MCF 10A (cell line): ENCODE measurements at regions of chr17 and their contacts with region 1.

Region 1: GRCh38 chr17:50626037-50626574 is 8.6 kb upstream of the ABCC3 start:
- DNase-seq: peak; percentile 75
- H3K4me3 Mint-ChIP-seq: no peak overlapping the region
- H3K27ac Mint-ChIP-seq: no peak overlapping the region
- H3K4me1 Mint-ChIP-seq: peaks cover 6% of the 10 kb centered on the region
- H3K27me3 Mint-ChIP-seq: no peaks in the 10 kb centered on the region
- CTCF ChIP-seq: peak; percentile 72

Region 2: DNA sequence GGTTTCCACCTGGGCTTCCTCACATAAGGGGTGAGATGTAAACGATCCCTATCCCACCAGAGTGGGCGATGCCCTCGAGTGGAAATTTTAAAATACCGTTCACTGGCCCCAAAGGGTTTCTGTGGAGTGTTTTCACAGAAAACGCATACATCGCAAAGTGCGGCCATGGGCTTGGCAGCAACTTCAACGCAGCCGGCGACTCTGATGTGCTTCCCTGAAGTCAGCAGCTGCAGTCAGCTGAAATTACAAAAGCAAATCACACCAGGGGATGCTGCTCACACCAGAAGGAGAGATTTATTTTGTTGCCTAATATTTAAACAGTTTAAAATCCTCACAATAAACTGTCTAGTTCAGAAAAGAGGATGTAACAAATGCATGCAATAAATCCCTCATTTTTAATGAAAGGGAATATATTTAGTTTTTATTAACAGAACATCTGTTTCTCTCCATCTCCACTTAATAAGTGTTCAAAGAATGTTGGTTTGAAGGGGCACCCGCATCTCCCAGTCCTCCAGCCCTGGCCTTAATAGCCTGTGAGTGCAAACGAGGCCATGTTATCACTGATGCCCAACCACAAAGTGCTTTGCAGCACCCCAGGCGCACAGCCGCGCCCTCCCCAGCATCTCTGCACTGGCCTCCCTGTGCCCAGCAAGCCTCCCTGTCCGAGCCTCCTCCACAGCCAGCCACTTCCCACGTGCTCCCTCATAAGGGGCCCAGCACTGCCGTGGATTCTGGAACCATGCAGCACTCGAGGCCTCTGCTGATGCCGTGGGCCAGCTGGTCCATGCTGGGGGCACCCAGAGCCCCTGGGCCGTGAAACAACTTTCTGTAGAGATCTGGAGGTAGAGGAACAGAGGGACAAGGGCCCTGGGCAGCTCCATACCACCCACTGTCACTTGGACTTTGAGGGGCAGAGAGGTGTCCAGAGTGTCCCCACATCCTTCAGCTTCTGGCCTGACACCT is 297.5 kb before region 1 on chr17:
- CTCF ChIA-PET with region 1: no interaction called
- POLR2A ChIA-PET with region 1: no interaction called
- intact Hi-C with region 1: no loop called
- DNase-seq: no peak
- H3K4me3 Mint-ChIP-seq: no peak overlapping the region
- H3K27ac Mint-ChIP-seq: no peak overlapping the region
- H3K4me1 Mint-ChIP-seq: peaks cover 13% of the 10 kb centered on the region
- H3K27me3 Mint-ChIP-seq: no peaks in the 10 kb centered on the region
- CTCF ChIP-seq: no peak

Region 3: GRCh38 chr17:50547035-50547735 is 78.9 kb before region 1 on chr17 and contains the start of gene SPATA20:
- CTCF ChIA-PET with region 1: interaction called, 22 read pairs
- POLR2A ChIA-PET with region 1: interaction called, 5 read pairs
- intact Hi-C with region 1: loop called (anchors 1 kb)
- DNase-seq: peak; percentile 89
- H3K4me3 Mint-ChIP-seq: peak within 1 kb of the TSS; percentile 79
- H3K27ac Mint-ChIP-seq: no peak within 1 kb of the TSS
- H3K4me1 Mint-ChIP-seq: peaks cover 17% of the 10 kb centered on the region
- H3K27me3 Mint-ChIP-seq: no peaks in the 10 kb centered on the region
- CTCF ChIP-seq: peak; percentile 99
- total RNA-seq, gene SPATA20: 35.3 and 39.4 TPM in 2 replicates

Region 4: DNA sequence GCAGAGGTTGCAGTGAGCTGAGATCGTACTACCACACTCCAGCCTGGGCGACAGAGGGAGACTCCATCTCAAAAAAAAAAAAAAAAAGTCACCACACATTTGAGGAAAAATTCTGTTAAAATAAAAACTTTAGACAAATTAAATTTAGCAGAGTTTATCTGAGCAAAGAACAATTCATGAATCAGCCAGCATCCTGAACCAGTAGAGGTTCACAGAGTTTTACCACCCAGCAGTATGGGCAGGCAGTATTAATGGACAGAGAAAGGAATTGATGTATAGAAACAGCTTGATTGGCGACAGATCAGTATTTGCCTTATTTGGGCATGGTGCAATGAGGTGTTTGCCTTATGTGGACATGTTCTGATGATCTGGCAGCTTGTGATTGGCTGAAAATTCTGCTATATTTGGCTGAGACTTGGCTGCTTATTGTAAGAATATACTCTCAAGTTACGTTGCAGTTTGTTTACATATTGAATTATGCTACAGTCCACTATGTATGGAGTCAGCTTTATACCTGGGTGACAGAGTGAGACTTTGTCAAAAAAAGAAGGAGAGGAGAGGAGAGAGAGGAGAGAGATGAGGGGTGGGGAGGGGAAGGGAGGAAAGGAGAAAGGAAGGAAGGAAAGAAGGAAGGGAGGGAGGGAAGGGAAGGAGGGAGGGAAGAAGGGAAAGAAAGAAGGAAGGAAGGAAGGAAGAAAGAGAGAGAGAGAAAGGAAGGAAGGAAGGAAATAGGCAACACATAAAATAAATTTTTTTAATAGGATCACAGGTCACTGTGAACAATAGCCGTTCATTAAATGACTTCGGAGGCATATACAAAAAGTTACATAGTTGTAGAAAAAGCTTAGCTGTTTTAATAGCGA is 23.2 kb after region 1 on chr17:
- CTCF ChIA-PET with region 1: interaction called, 28 read pairs
- POLR2A ChIA-PET with region 1: no interaction called
- intact Hi-C with region 1: no loop called
- DNase-seq: peak; percentile 77
- H3K4me3 Mint-ChIP-seq: no peak overlapping the region
- H3K27ac Mint-ChIP-seq: no peak overlapping the region
- H3K4me1 Mint-ChIP-seq: peaks cover 19% of the 10 kb centered on the region
- H3K27me3 Mint-ChIP-seq: no peaks in the 10 kb centered on the region
- CTCF ChIP-seq: no peak

Region 5: GRCh38 chr17:50668025-50668837 is 42.1 kb after region 1 on chr17:
- CTCF ChIA-PET with region 1: interaction called, 12 read pairs
- POLR2A ChIA-PET with region 1: no interaction called
- intact Hi-C with region 1: no loop called
- DNase-seq: peak; percentile 58
- H3K4me3 Mint-ChIP-seq: peak overlapping the region; percentile 40
- H3K27ac Mint-ChIP-seq: peak overlapping the region; percentile 77
- H3K4me1 Mint-ChIP-seq: peaks cover 53% of the 10 kb centered on the region
- H3K27me3 Mint-ChIP-seq: no peaks in the 10 kb centered on the region
- CTCF ChIP-seq: no peak

Region 6: DNA sequence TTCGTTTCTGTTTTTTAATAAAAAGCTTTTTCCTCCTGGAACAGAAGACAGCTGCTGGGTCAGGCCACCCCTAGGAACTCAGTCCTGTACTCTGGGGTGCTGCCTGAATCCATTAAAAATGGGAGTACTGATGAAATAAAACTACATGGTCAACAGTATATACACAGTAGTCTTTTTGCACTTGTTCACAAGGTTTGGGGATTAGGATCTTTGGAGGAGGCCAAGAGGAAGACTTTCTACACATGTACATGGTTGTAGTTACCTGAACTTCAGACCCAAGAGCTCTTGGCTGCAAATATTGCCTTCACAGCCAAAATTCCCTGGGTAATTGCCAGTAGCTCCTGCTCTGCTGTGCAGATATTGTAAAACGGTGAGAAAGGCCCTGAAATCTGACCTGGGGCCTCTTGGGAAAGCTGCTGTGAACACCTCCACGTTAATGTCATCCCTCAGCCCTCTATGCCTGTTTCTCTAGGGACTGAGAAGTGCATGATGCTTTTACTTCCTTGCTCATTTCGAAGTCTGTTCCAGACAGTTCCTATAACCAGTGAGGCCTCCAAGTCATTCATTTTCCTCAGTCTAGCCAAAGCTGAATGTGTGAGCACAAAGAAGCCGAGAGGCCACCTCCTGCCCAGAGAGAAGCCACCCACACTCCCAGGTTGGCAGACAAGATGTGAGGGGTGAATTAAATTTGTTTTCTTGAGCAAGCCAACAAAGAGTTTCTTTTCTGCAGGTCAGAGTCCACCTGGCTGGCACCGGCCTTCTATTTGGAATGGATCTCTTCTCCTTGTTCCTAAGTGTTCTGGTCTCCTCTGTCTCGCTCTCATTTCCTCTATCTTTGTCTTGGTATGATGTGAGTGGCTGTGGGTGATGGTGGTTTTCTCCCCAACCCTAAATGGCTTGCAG is 65.7 kb after region 1 on chr17:
- CTCF ChIA-PET with region 1: interaction called, 248 read pairs
- POLR2A ChIA-PET with region 1: interaction called, 11 read pairs
- intact Hi-C with region 1: loop called (anchors 1 kb)
- DNase-seq: peak; percentile 79
- H3K4me3 Mint-ChIP-seq: no peak overlapping the region
- H3K27ac Mint-ChIP-seq: peak overlapping the region; percentile 42
- H3K4me1 Mint-ChIP-seq: peaks cover 52% of the 10 kb centered on the region
- H3K27me3 Mint-ChIP-seq: no peaks in the 10 kb centered on the region
- CTCF ChIP-seq: no peak

Region 7: DNA sequence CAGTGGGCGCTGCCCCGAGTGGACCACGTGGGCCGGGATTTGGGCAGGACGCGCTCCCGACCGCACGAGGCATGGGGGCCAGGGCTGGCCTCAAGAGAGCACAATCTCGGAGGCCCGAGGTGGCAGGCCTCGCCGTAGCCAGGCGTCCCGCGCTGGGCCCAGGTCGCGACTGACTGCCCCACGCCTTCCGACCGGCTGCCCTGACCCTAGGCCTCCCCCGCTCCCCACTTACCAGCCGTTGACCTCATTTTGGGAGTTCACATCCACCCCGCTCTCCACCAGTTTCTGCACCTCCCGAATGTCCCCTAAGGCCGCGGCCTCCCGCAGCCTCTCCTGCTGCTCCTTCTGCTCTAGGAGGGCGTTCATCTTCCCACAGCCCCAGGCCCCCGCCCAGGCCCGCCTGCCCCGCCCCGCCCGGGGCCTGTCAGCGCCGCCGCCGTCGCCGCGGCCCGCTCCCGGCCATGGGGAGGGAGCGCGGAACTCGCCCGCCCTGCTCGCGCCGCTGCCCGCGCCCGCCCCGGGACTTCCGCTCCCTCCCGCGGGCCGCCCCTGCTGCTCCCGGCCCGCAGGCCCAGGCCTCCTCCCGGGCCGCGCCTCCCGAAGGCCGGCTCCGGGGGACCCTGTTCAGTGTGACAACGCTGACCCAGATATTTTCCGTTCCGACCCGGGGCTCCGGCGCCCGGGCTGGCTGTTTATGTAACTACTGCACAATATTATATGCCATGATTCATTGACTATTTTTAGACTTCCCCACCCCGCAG is 81.4 kb after region 1 on chr17 and contains the start of gene ANKRD40:
- CTCF ChIA-PET with region 1: interaction called, 31 read pairs
- POLR2A ChIA-PET with region 1: interaction called, 7 read pairs
- intact Hi-C with region 1: no loop called
- DNase-seq: peak; percentile 94
- H3K4me3 Mint-ChIP-seq: peak within 1 kb of the TSS; percentile 95
- H3K27ac Mint-ChIP-seq: peak within 1 kb of the TSS; percentile 76
- H3K4me1 Mint-ChIP-seq: peaks cover 25% of the 10 kb centered on the region
- H3K27me3 Mint-ChIP-seq: no peaks in the 10 kb centered on the region
- CTCF ChIP-seq: no peak
- total RNA-seq, gene ANKRD40: 42.2 and 46.4 TPM in 2 replicates